ENCODE measurements at regions of chr17 and their contacts with region 1.

Region 1: DNA sequence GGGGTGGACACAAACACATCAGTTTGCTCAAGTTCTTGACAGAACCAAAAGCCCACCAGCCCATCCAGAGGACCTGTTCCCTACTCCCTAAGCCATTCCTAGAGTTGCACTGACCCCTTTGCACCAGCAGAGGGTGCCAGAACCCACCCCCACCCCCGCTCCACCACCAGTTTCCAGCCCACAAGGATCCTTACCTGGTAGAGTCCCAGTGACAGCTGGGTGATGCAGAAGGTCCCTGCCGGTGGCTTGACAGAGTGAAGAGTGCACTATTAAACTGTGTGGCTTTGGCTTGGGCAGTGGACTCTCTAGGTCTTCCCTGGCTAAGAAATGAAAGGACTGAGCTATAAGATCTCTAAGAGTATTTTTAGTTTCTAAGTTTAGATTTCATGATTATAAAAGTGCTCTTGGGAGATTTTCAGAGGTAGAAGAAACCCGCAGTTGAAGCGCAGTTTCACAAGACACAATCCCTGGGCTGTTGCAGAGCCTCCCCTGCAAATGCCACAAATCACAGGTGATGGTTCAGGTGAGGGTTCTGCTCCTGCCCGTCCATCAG is 73.3 kb upstream of the MTMR4 start:
- DNase-seq: peak; percentile 5 to 79 (median 45)
- ATAC-seq: peak; percentile 71 to 85 (median 77)
- H3K4me3 ChIP-seq: no peak overlapping the region
- H3K4me3 Mint-ChIP-seq: no peak overlapping the region
- H3K27ac ChIP-seq: no peak overlapping the region
- H3K27ac Mint-ChIP-seq: no peak overlapping the region
- H3K4me1 ChIP-seq: peaks cover 0 to 4% of the 10 kb centered on the region in 2 experiments
- H3K4me1 Mint-ChIP-seq: peaks cover 0 to 2% (median 2%) of the 10 kb centered on the region in 3 donors
- H3K27me3 ChIP-seq: no peaks in the 10 kb centered on the region
- H3K27me3 Mint-ChIP-seq: no peaks in the 10 kb centered on the region

Region 2: GRCh38 chr17:58166682-58167081 is 421.1 kb before region 1 on chr17 and contains the start of gene OR4D2:
- CTCF ChIA-PET with region 1: interaction called in 1 of 2 experiments, 10 read pairs
- POLR2A ChIA-PET with region 1: no interaction called
- DNase-seq: no peak
- ATAC-seq: no peak
- H3K4me3 ChIP-seq: no peak within 1 kb of the TSS
- H3K4me3 Mint-ChIP-seq: peak within 1 kb of the TSS in 1 of 3 donors; percentile 47
- H3K27ac ChIP-seq: no peak within 1 kb of the TSS
- H3K27ac Mint-ChIP-seq: peak within 1 kb of the TSS in 1 of 2 donors; percentile 74
- H3K4me1 ChIP-seq: peaks cover 18 to 30% of the 10 kb centered on the region in 2 experiments
- H3K4me1 Mint-ChIP-seq: peaks cover 45 to 62% (median 57%) of the 10 kb centered on the region in 3 donors
- H3K27me3 ChIP-seq: peaks cover 0 to 2% of the 10 kb centered on the region in 2 experiments
- H3K27me3 Mint-ChIP-seq: peaks cover 0 to 3% of the 10 kb centered on the region in 2 donors
- total RNA-seq, gene OR4D2: not detected

Region 3: DNA sequence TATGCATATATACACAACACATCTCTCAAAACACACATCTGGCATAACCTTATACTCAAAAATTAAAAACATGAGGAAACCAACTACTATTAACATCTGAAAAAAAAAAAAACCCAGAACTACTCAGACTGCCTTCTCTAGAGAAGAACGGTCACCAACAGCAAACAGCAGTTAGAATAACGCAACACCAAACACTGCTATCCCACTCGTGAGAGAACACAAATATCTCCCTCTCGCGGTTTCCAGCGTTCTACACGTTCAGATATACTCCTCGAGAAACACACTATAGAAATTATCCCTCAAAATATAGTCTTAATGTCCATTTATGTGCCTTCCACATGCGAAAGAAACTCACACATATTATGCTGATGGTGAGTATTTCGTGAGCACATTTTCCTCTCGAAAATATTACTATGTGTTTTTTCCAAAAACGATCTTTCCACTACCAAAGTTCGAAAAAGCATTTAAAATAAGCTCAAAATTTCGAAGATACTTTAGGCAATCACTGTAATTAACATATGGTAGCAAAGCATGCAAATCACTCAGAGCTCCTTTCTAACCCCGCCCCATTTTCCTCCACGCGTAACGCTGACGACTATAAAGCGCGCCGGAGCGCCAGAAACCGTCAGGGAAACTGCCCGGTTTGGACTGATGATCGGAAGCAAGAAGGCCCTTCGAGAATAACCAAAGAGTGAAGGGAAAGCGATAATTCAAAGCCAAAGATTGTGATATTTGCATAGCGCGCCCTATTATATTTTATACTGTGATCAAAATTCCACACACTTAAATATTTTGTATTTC is 43.9 kb after region 1 on chr17:
- CTCF ChIA-PET with region 1: interaction called, 6 to 10 read pairs
- POLR2A ChIA-PET with region 1: interaction called in 1 of 2 experiments, 6 read pairs
- DNase-seq: peak; percentile 77 to 96 (median 90)
- ATAC-seq: peak; percentile 87 to 90 (median 88)
- H3K4me3 ChIP-seq: peak overlapping the region; percentile 44 to 69
- H3K4me3 Mint-ChIP-seq: no peak overlapping the region
- H3K27ac ChIP-seq: peak overlapping the region; percentile 90
- H3K27ac Mint-ChIP-seq: no peak overlapping the region
- H3K4me1 ChIP-seq: peaks cover 5 to 10% of the 10 kb centered on the region in 2 experiments
- H3K4me1 Mint-ChIP-seq: peaks cover 0 to 11% (median 5%) of the 10 kb centered on the region in 3 donors
- H3K27me3 ChIP-seq: no peaks in the 10 kb centered on the region
- H3K27me3 Mint-ChIP-seq: no peaks in the 10 kb centered on the region

Region 4: DNA sequence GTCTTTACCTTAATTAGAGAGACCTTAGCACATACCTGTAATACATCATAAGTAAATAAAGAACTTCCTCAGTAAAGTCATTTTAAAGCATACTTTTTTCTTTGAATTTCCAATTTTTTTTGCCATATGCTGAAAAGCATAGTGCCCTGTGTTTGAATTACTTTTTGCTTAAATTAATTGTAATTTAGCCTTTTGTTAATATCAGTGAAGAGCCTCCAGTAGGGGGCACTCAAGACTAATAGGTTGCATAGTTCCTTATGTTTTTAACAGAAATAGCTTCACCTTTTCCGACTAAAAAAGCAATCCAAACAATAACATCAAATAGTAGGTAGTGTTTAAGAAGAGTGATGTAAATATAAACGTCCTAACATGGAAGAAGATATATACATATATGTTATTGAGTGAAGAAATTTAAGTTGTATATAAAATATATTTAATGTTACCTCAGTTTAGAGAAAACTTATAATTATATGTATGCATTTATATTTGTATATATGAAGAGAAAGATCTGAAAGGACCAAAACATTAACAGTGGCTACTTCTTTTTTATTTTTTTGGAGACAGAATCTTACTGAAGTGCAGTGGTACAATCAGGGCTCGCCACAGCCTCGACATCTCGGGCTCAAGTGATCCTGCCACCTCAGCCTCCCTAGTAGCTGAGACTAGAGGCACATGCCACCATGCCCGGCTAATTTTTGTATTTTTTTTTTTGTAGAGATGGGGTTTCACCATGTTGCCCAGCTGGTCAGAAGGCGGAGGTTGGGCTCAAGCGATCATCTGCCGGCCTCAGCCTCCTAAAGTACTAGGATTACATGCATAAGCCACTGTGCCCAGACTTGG is 123.4 kb after region 1 on chr17:
- CTCF ChIA-PET with region 1: interaction called in 1 of 2 experiments, 10 read pairs
- POLR2A ChIA-PET with region 1: no interaction called
- DNase-seq: peak in 20 of 35 experiments; percentile 5 to 71 (median 21)
- ATAC-seq: no peak
- H3K4me3 ChIP-seq: no peak overlapping the region
- H3K4me3 Mint-ChIP-seq: no peak overlapping the region
- H3K27ac ChIP-seq: no peak overlapping the region
- H3K27ac Mint-ChIP-seq: no peak overlapping the region
- H3K4me1 ChIP-seq: no peaks in the 10 kb centered on the region
- H3K4me1 Mint-ChIP-seq: peaks cover 0 to 6% (median 2%) of the 10 kb centered on the region in 3 donors
- H3K27me3 ChIP-seq: no peaks in the 10 kb centered on the region
- H3K27me3 Mint-ChIP-seq: no peaks in the 10 kb centered on the region

Region 5: GRCh38 chr17:59004338-59005111 is 416.7 kb after region 1 on chr17:
- CTCF ChIA-PET with region 1: interaction called in 1 of 2 experiments, 14 read pairs
- POLR2A ChIA-PET with region 1: no interaction called
- DNase-seq: peak; percentile 32 to 85 (median 60)
- ATAC-seq: peak; percentile 38 to 61 (median 54)
- H3K4me3 ChIP-seq: no peak overlapping the region
- H3K4me3 Mint-ChIP-seq: no peak overlapping the region
- H3K27ac ChIP-seq: peak overlapping the region; percentile 1
- H3K27ac Mint-ChIP-seq: peak overlapping the region; percentile 61 to 62
- H3K4me1 ChIP-seq: peaks cover 5 to 13% of the 10 kb centered on the region in 2 experiments
- H3K4me1 Mint-ChIP-seq: peaks cover 17 to 19% (median 18%) of the 10 kb centered on the region in 3 donors
- H3K27me3 ChIP-seq: no peaks in the 10 kb centered on the region
- H3K27me3 Mint-ChIP-seq: no peaks in the 10 kb centered on the region